Left ventricle myocardium inferior (tissue), 1 donor: ENCODE measurements at regions of chr2 and their contacts with region 1.

Region 1: GRCh38 chr2:62042889-62043288 is 137.4 kb downstream of the COMMD1 start:
- DNase-seq: no peak
- H3K4me3 ChIP-seq: no peak overlapping the region
- H3K27ac ChIP-seq: no peak overlapping the region
- H3K4me1 ChIP-seq: peaks cover 4% of the 10 kb centered on the region
- H3K27me3 ChIP-seq: no peaks in the 10 kb centered on the region
- CTCF ChIP-seq: no peak

Region 2: DNA sequence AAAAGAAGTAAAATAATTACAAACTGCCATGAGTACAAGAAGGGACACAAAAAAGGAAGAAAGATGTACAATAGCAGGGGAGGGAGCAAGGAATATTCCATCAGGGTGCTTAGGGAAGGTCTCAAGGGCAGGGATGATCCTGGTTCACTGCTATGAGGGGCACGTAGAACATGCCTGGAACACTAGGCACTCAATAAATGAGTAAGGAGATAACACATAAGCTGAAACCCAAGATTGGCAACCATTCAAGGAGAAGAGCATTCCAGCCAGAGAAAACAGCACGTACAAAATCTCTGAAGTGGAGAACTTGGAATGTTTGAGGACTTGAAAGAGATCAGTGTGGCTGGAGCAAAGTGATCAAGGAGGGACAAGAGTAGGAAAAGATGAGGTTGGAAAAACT is 292.3 kb before region 1 on chr2:
- intact Hi-C with region 1: no loop called
- DNase-seq: no peak
- H3K4me3 ChIP-seq: no peak overlapping the region
- H3K27ac ChIP-seq: peak overlapping the region; percentile 31
- H3K4me1 ChIP-seq: peaks cover 8% of the 10 kb centered on the region
- H3K27me3 ChIP-seq: no peaks in the 10 kb centered on the region
- CTCF ChIP-seq: no peak

Region 3: DNA sequence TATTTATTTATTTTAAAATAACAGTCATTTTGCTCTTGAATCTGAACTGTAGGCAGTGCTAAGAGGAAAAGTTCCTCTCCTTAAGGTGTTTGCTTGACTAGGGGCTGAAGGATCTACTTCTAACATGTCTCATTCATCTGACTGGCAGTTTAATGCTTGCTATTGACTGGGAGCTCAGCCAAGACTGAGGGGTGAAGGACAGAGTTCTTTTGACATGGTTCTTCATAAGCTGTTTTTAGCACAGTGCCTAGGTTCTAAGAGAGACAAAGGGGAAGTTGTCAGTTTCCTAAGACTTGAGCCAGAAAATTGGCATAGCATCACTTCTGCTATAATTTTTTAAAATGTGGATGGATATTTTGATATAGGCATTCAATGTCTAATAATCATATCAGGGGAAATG is 64.4 kb before region 1 on chr2:
- intact Hi-C with region 1: no loop called
- DNase-seq: peak; percentile 19
- H3K4me3 ChIP-seq: no peak overlapping the region
- H3K27ac ChIP-seq: peak overlapping the region; percentile 66
- H3K4me1 ChIP-seq: peaks cover 25% of the 10 kb centered on the region
- H3K27me3 ChIP-seq: no peaks in the 10 kb centered on the region
- CTCF ChIP-seq: no peak

Region 4: DNA sequence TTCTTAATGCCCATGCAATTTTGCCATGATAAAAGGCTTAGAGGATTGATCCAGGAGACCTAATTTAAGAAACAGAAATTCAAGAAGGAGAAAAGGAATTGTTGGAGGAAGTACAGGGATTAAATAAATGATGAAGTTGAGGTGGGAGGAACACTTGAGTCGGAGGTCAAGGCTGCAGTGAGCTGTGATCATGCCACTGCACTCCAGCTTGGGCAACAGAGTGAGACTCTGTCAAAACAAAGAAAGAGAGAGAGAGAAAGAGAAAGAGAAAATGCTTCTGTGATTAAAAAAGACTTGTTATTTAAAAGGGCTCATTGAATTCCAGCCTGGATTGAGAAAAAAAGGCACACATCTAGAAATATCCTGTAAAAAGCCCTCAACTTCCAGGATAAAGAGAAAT is 276.2 kb after region 1 on chr2:
- intact Hi-C with region 1: loop called (anchors 5 kb)
- DNase-seq: no peak
- H3K4me3 ChIP-seq: no peak overlapping the region
- H3K27ac ChIP-seq: no peak overlapping the region
- H3K4me1 ChIP-seq: no peaks in the 10 kb centered on the region
- H3K27me3 ChIP-seq: no peaks in the 10 kb centered on the region
- CTCF ChIP-seq: no peak

Region 5: DNA sequence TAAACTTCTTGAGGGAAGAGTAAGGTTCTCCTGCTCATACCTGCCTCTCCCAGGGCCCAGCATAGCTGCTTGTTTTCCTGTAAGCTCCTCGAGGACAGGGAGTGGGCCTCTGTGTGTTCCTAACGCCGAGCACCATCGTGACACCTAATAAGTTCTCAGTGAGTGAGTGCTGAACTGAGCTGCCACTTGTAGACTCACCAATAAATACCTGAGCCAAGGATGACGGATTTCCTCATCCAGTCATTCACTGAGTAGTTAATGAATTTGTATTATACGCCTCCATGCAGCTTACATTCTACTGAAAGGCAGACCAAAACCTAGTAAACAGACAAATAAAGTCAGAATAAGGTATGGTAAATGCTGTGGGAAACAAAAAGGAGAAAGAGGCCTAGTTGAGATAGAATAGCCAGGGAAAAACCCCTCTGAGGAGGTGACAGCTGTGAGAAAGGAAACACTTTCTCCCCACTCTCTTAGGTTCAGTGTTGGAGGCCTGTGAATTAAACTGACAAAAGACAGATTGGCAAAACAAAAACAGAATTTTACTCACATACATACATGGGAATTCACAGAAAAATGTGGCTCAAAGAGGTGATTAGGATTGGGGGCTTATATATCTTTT is 291.7 kb after region 1 on chr2:
- intact Hi-C with region 1: no loop called
- DNase-seq: no peak
- H3K4me3 ChIP-seq: no peak overlapping the region
- H3K27ac ChIP-seq: no peak overlapping the region
- H3K4me1 ChIP-seq: peaks cover 3% of the 10 kb centered on the region
- H3K27me3 ChIP-seq: no peaks in the 10 kb centered on the region
- CTCF ChIP-seq: no peak